ENCODE measurements at regions of chr2 and their contacts with region 1.

Region 1: GRCh38 chr2:64144057-64145013 is at the start of gene PELI1:
- DNase-seq: peak; percentile 97
- H3K4me3 Mint-ChIP-seq: peak within 1 kb of the TSS; percentile 96
- H3K27ac Mint-ChIP-seq: peak within 1 kb of the TSS; percentile 97
- H3K4me1 Mint-ChIP-seq: peaks cover 24% of the 10 kb centered on the region
- H3K27me3 Mint-ChIP-seq: no peaks in the 10 kb centered on the region
- total RNA-seq, gene PELI1: 38.4 to 42.9 TPM

Region 2: GRCh38 chr2:63841254-63842022 is 302.9 kb before region 1 on chr2 and contains the start of gene UGP2:
- CTCF ChIA-PET with region 1: no interaction called
- POLR2A ChIA-PET with region 1: no interaction called
- intact Hi-C with region 1: loop called (anchors 5 kb)
- DNase-seq: peak; percentile 91
- H3K4me3 Mint-ChIP-seq: peak within 1 kb of the TSS; percentile 99
- H3K27ac Mint-ChIP-seq: peak within 1 kb of the TSS; percentile 100
- H3K4me1 Mint-ChIP-seq: peaks cover 44% of the 10 kb centered on the region
- H3K27me3 Mint-ChIP-seq: no peaks in the 10 kb centered on the region
- total RNA-seq, gene UGP2: 113 to 119 TPM

Region 3: DNA sequence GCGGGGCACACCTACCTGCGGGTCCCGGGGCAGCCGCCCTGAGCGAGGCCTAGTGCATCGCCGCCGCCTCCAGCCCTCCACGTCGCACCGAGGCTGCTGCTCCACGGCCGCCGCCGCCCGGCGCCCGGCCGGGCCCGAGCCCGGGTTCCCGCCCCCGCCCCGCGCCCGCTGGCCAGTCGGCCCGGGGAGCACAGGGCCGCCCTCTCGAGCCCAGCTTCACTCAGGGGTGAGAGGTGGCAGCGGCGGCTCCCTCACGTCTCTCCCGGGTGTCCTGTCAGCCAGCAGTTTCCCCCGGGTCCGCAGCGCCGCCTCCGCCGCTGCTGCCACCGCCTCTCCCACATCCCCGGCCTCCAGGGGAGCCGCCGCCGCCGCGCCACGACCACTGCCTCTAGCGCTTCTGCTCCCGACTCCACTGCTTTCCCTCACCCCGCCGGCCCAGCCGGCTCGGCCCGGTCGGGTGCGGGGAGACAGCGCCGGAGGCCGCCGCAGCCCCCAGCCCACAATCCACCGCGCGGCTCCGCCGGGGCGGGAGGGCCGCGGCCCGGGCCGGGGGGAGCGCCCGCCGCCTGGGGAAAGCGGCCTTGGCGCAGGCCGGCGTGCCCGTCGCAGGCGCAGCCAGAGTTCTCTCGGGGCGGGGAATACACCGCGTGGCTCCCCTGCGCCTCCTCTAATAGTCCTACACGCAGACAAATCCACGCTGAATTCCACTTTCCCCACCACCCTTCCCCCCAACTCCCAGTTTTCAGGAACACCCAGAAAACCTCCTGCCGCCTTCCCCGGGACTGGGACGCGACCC is 125.2 kb before region 1 on chr2 and contains the start of gene VPS54:
- CTCF ChIA-PET with region 1: no interaction called
- POLR2A ChIA-PET with region 1: interaction called, 3 read pairs
- intact Hi-C with region 1: loop called (anchors 2 kb)
- DNase-seq: peak; percentile 63
- H3K4me3 Mint-ChIP-seq: peak within 1 kb of the TSS; percentile 98
- H3K27ac Mint-ChIP-seq: peak within 1 kb of the TSS; percentile 93
- H3K4me1 Mint-ChIP-seq: peaks cover 41% of the 10 kb centered on the region
- H3K27me3 Mint-ChIP-seq: no peaks in the 10 kb centered on the region
- total RNA-seq, gene VPS54: 12.5 to 12.8 TPM

Region 4: GRCh38 chr2:64062829-64063228 is 81.5 kb before region 1 on chr2:
- CTCF ChIA-PET with region 1: no interaction called
- POLR2A ChIA-PET with region 1: no interaction called
- intact Hi-C with region 1: loop called (anchors 1 kb)
- DNase-seq: no peak
- H3K4me3 Mint-ChIP-seq: no peak overlapping the region
- H3K27ac Mint-ChIP-seq: no peak overlapping the region
- H3K4me1 Mint-ChIP-seq: peaks cover 29% of the 10 kb centered on the region
- H3K27me3 Mint-ChIP-seq: peaks cover 2% of the 10 kb centered on the region

Region 5: DNA sequence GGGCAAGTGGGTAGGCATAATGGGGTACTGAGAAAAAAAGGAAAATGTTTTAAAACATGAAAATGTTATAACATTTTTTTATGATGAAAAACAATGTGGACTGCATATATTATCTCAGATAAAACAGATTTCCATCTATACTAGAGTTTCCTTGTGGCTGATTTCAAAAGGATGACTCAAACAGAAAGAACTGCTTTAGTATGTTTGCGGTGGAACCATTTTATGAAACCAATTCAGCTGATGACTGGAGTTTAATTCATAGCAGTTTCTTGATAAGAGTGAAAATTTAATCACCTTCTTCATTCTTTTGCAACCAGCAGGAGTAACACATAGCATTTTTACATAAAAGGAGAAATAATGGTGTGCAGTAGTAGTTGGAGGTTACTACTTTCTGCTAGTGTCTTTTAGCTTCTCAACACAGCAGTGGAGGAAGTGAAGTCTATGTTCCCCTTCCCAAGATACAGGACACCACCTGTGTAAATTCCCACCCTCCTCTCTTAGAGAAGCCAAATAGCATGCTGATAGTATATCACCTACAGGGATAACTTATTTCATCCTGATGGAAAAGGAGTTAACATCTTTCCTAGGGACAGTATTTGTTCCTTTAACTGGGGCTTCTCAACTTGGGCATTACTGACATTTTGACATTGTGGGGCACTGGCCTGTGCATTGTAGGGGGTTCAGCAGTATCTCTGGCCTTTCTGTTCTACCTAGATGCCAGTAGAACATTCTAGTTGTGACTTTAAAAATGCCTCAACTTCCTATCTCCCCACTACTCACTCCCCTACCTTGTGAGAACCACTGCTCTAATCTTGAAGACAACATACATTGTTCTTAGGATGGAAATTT is 30.0 kb before region 1 on chr2:
- CTCF ChIA-PET with region 1: no interaction called
- POLR2A ChIA-PET with region 1: interaction called, 4 read pairs
- intact Hi-C with region 1: loop called (anchors 1 kb)
- DNase-seq: no peak
- H3K4me3 Mint-ChIP-seq: no peak overlapping the region
- H3K27ac Mint-ChIP-seq: peak overlapping the region; percentile 85
- H3K4me1 Mint-ChIP-seq: peaks cover 70% of the 10 kb centered on the region
- H3K27me3 Mint-ChIP-seq: no peaks in the 10 kb centered on the region

Region 6: DNA sequence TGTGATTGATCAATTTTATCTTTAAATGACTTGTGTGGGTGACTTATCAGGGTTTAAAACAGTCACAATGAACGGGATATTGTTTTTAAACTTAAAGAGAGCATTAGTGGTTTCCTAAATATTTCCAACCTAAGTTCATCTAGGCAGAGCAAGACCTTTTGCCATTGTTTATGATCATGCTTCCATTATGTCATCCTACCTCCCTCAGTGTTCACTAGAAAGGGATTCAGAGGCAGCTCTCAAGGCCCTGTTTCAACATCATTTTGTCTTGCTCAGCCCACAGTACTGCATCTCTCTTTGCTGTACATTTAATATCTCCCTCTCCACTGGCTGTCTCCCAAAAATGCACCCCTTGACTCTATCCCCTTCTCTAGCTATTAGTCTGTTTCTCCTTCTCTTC is 21.4 kb after region 1 on chr2:
- CTCF ChIA-PET with region 1: no interaction called
- POLR2A ChIA-PET with region 1: no interaction called
- intact Hi-C with region 1: loop called (anchors 1 kb)
- DNase-seq: no peak
- H3K4me3 Mint-ChIP-seq: no peak overlapping the region
- H3K27ac Mint-ChIP-seq: no peak overlapping the region
- H3K4me1 Mint-ChIP-seq: no peaks in the 10 kb centered on the region
- H3K27me3 Mint-ChIP-seq: no peaks in the 10 kb centered on the region

Region 7: GRCh38 chr2:64295326-64296139 is 151.2 kb after region 1 on chr2:
- CTCF ChIA-PET with region 1: no interaction called
- POLR2A ChIA-PET with region 1: interaction called, 3 read pairs
- intact Hi-C with region 1: loop called (anchors 1 kb)
- DNase-seq: peak; percentile 84
- H3K4me3 Mint-ChIP-seq: no peak overlapping the region
- H3K27ac Mint-ChIP-seq: peak overlapping the region; percentile 26
- H3K4me1 Mint-ChIP-seq: peaks cover 30% of the 10 kb centered on the region
- H3K27me3 Mint-ChIP-seq: peaks cover 2% of the 10 kb centered on the region

Measured in activated CD4-positive, alpha-beta memory T cell treated with anti-CD3 and anti-CD28 coated beads for 36 hours (primary cell).